ENCODE measurements at regions of chr5 and their contacts with region 1.

Region 1: GRCh38 chr5:179821581-179822432 is 1.1 kb downstream of the SQSTM1 start:
- DNase-seq: peak; percentile 98
- H3K4me3 Mint-ChIP-seq: peak overlapping the region; percentile 97
- H3K27ac Mint-ChIP-seq: peak overlapping the region; percentile 99
- H3K4me1 Mint-ChIP-seq: peaks cover 50% of the 10 kb centered on the region
- H3K27me3 Mint-ChIP-seq: no peaks in the 10 kb centered on the region
- CTCF ChIP-seq: no peak

Region 2: DNA sequence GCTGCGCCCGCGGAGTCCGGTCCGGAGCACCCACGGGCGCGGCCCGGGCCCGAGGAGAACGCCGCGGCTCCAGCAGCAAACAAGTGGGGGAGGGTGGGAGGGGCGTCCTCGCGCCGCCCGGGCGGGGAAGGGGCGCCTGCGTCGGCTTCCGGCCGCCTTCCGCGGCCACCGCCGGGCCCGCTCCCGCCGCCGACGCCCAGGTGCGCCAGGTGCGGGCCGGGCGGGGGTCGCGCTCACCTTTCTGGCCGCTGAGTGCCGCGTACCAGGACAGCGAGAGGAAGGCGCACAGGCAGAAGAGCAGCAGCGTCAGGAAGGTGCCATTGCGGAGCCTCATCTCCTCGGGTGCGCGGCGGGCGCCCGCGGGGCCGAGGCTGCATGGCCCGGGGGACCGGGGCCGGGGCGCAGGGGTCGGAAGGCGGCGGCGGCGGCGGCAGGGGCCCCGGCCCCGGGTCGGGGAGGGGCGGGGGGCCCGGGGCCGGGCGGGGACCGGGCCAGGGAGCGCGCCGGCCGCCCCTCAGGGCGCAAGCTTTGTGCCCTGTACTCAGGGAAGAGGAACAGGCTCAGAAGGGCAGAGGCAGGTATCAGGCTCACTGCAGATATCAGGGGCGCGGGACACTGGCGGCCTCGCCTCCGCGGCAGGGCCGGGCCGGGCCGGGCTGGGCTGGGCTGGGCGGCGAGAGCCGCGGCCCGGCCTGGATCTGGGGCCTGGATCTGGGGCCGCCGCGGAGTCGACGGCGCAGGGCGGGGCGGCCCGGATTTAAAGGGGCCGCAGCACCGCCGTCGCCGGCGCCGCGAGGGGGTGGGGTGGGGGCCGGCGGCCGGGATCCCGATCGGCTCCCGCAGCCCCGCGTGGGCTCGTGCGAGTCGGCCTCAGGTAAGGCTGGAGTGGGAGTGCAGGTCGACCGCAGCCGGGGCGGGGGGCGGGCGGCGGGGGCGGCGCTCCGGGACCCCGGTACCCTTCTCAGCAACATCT is 15.3 kb before region 1 on chr5 and contains the start of gene MGAT4B:
- CTCF ChIA-PET with region 1: interaction called, 6 read pairs
- intact Hi-C with region 1: loop called (anchors 1 kb)
- DNase-seq: peak; percentile 87
- H3K4me3 Mint-ChIP-seq: peak within 1 kb of the TSS; percentile 95
- H3K27ac Mint-ChIP-seq: peak within 1 kb of the TSS; percentile 93
- H3K4me1 Mint-ChIP-seq: peaks cover 26% of the 10 kb centered on the region
- H3K27me3 Mint-ChIP-seq: no peaks in the 10 kb centered on the region
- CTCF ChIP-seq: no peak
- total RNA-seq, gene MGAT4B: 610 and 613 TPM in 2 replicates

Region 3: DNA sequence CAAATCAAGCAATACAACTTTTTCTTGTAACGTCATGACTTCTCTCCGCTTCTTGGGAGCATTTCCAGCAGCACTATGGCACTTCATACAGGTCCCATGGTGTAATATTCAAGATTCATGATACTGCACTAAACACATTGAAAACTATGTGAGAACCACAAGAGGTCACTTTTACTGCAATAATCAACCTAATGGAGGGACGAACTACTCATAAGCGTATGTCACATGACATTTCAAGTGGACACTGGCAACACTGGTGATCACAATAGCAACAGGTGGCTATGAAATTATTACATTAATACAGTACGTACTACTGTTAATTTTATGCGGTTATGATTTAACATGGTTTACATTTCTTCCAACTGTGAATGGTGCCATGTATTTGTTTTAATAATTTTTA is 164.5 kb after region 1 on chr5:
- CTCF ChIA-PET with region 1: no interaction called
- intact Hi-C with region 1: no loop called
- DNase-seq: no peak
- H3K4me3 Mint-ChIP-seq: no peak overlapping the region
- H3K27ac Mint-ChIP-seq: no peak overlapping the region
- H3K4me1 Mint-ChIP-seq: no peaks in the 10 kb centered on the region
- H3K27me3 Mint-ChIP-seq: no peaks in the 10 kb centered on the region
- CTCF ChIP-seq: no peak

Measured in Calu3 (cell line).